ENCODE measurements at regions of chr10 and their contacts with region 1.

Region 1: GRCh38 chr10:4656576-4657182 is 169.3 kb upstream of the AKR1E2 start:
- DNase-seq: peak; percentile 42 to 60 (median 47)
- ATAC-seq: peak; percentile 70; the same call in 2 of the 3 replicates
- H3K4me3 ChIP-seq: no peak overlapping the region
- H3K27ac ChIP-seq: no peak overlapping the region
- H3K4me1 ChIP-seq: no peaks in the 10 kb centered on the region
- H3K27me3 ChIP-seq: peaks cover 0 to 6% of the 10 kb centered on the region in 2 experiments; a peak in 2 of 5 replicates
- CTCF ChIP-seq: peak; percentile 77 to 80 (median 79)
- EP300 ChIP-seq: no peak
- POLR2A ChIP-seq: no peak
- RAD21 ChIP-seq: peak; percentile 79 to 81

Region 2: GRCh38 chr10:3197348-3198003 is 1459.2 kb before region 1 on chr10:
- CTCF ChIA-PET with region 1: interaction called, 4 read pairs
- POLR2A ChIA-PET with region 1: no interaction called
- in situ Hi-C with region 1: no loop called
- intact Hi-C with region 1: loop called (anchors 5 kb)
- DNase-seq: peak; percentile 69 to 79 (median 74)
- ATAC-seq: peak; percentile 94
- H3K4me3 ChIP-seq: no peak overlapping the region
- H3K27ac ChIP-seq: no peak overlapping the region
- H3K4me1 ChIP-seq: peaks cover 0 to 8% of the 10 kb centered on the region in 2 experiments; a peak in 2 of 5 replicates
- H3K27me3 ChIP-seq: peaks cover 33 to 74% of the 10 kb centered on the region in 2 experiments
- CTCF ChIP-seq: peak; percentile 81 to 88 (median 86)
- EP300 ChIP-seq: peak; percentile 54; the same call in 1 of the 2 replicates
- POLR2A ChIP-seq: no peak
- RAD21 ChIP-seq: peak; percentile 85 to 90

Region 3: DNA sequence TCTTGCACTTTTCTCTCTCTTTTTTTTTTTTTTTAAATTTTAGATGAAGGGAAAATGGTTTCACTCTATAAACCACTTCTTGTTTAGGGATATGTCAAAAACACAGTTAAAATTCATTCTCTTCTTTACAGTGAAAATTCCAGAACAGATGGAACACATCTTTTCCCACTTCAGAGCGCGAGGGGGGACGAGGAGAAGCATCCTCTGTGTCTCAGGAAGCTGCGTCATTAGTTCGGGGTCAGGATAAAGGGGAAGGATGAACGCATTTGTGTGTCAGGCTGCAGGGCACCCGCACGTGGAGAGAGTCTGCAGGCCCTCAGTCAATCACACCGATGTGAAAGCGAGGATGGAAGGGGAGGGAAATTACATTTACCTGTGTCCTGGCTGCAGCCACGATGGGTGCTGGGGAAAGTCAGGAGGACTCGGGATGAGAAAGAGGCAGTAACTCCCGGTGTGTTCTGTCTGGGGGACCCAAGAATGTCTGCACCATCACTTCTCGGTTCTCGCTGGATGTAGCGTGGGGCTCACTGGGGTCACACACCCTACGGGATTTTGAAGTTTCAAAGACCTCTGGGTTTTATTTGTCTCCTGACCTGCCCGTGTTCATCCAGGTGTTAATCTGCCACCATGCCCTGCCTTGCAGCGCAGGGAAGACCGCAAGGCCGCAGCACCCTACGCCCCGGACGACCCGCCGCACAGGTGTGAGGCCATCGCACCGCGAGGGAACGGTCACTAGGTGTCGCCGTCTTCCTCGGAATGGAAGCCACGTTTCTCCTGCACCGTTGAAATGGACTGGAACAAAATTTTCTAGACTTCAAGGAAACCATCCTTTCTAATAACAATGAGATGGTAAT is 1417.4 kb before region 1 on chr10:
- CTCF ChIA-PET with region 1: interaction called, 13 read pairs
- POLR2A ChIA-PET with region 1: no interaction called
- in situ Hi-C with region 1: loop called (anchors 10 kb)
- intact Hi-C with region 1: loop called (anchors 10 kb)
- DNase-seq: peak; percentile 56 to 72 (median 60)
- ATAC-seq: peak; percentile 96
- H3K4me3 ChIP-seq: no peak overlapping the region
- H3K27ac ChIP-seq: no peak overlapping the region
- H3K4me1 ChIP-seq: peaks cover 0 to 8% of the 10 kb centered on the region in 2 experiments; a peak in 1 of 5 replicates
- H3K27me3 ChIP-seq: peaks cover 39 to 88% of the 10 kb centered on the region in 2 experiments
- CTCF ChIP-seq: peak; percentile 81 to 90 (median 86)
- EP300 ChIP-seq: no peak
- POLR2A ChIP-seq: no peak
- RAD21 ChIP-seq: peak; percentile 87 to 92

Region 4: GRCh38 chr10:4195213-4195612 is 461.5 kb before region 1 on chr10:
- CTCF ChIA-PET with region 1: no interaction called
- POLR2A ChIA-PET with region 1: no interaction called
- in situ Hi-C with region 1: no loop called
- intact Hi-C with region 1: loop called (anchors 10 kb)
- DNase-seq: peak in 1 of 4 experiments; percentile 7
- ATAC-seq: no peak
- H3K4me3 ChIP-seq: no peak overlapping the region
- H3K27ac ChIP-seq: no peak overlapping the region
- H3K4me1 ChIP-seq: no peaks in the 10 kb centered on the region
- H3K27me3 ChIP-seq: peaks cover 2 to 24% of the 10 kb centered on the region in 2 experiments; a peak in 3 of 5 replicates
- CTCF ChIP-seq: no peak
- EP300 ChIP-seq: no peak
- POLR2A ChIP-seq: no peak
- RAD21 ChIP-seq: no peak

Region 5: DNA sequence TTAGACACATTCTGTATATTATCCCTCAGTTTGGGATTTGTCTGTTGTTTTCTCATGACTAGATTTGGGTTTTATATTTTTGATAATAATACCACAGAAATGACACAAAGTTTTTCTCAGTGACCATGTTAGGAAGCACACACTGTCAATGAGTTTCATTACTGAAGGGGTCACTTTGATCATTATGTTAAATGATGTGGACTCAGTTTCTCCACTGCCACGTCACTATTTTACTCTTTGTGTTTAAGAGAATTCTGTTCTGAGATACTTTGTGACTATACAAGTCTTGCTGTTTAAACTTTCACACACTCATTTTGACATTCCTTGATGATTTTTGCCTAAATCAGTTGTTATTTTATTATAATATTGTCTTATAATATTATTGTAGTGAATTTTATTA is 231.6 kb before region 1 on chr10:
- CTCF ChIA-PET with region 1: no interaction called
- POLR2A ChIA-PET with region 1: no interaction called
- in situ Hi-C with region 1: no loop called
- intact Hi-C with region 1: no loop called
- DNase-seq: no peak
- ATAC-seq: no peak
- H3K4me3 ChIP-seq: no peak overlapping the region
- H3K27ac ChIP-seq: no peak overlapping the region
- H3K4me1 ChIP-seq: no peaks in the 10 kb centered on the region
- H3K27me3 ChIP-seq: no peaks in the 10 kb centered on the region
- CTCF ChIP-seq: no peak
- EP300 ChIP-seq: no peak
- POLR2A ChIP-seq: no peak
- RAD21 ChIP-seq: no peak

Region 6: GRCh38 chr10:4704034-4704545 is 47.4 kb after region 1 on chr10:
- CTCF ChIA-PET with region 1: no interaction called
- POLR2A ChIA-PET with region 1: no interaction called
- in situ Hi-C with region 1: no loop called
- intact Hi-C with region 1: no loop called
- DNase-seq: no peak
- ATAC-seq: no peak
- H3K4me3 ChIP-seq: no peak overlapping the region
- H3K27ac ChIP-seq: no peak overlapping the region
- H3K4me1 ChIP-seq: no peaks in the 10 kb centered on the region
- H3K27me3 ChIP-seq: no peaks in the 10 kb centered on the region; a peak in 1 of 5 replicates
- CTCF ChIP-seq: no peak
- EP300 ChIP-seq: no peak
- POLR2A ChIP-seq: no peak
- RAD21 ChIP-seq: no peak

Region 7: DNA sequence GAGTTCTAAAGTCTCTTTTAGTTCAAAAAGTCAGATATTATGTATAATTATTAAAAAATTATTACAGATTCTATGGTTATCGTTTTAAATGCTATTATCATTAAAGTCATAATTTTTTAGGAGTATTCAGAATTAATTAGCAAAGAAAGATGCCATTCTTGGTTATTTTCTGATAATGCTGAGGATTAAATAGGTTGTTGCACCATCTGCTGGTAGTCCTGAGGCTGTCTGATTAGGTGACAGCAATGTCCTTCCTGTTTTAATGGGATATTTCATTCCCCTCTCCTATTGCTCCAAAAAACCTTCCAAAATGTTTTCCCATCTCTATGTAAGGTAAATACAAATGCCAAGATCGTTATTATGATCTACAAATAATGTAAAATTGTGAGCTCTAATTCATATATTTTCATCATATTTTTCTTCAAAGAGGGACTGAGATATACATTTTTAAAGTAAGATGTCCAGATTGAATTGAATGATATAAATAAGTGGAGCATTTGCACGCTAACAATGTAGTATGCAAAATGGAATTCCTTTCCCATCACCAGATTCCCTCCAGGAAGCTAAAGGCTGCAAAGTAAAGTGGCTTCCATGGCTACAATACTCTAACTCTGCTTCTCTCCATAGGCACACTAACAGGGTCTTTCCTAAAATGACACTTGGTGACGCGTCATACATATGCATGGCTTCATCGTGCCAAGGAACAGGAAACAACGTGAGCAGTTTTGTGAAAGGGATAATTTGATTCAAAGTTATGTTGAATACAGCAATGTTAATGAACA is 110.5 kb after region 1 on chr10:
- CTCF ChIA-PET with region 1: no interaction called
- POLR2A ChIA-PET with region 1: no interaction called
- in situ Hi-C with region 1: no loop called
- intact Hi-C with region 1: loop called (anchors 5 kb)
- DNase-seq: peak in 2 of 4 experiments; percentile 11 to 21
- ATAC-seq: 0 out of 3 replicates have a peak, but pooled peaks have one; percentile 49
- H3K4me3 ChIP-seq: no peak overlapping the region
- H3K27ac ChIP-seq: no peak overlapping the region
- H3K4me1 ChIP-seq: no peaks in the 10 kb centered on the region
- H3K27me3 ChIP-seq: peaks cover 0 to 4% of the 10 kb centered on the region in 2 experiments; a peak in 1 of 5 replicates
- CTCF ChIP-seq: peak; percentile 27 to 68 (median 49); a peak in 4 of 6 replicates
- EP300 ChIP-seq: no peak
- POLR2A ChIP-seq: no peak
- RAD21 ChIP-seq: peak; percentile 77 to 86

Measured in K562 (cell line).